Colonic mucosa (tissue), 4 donors: ENCODE measurements at regions of chr5 and their contacts with region 1.

Region 1: DNA sequence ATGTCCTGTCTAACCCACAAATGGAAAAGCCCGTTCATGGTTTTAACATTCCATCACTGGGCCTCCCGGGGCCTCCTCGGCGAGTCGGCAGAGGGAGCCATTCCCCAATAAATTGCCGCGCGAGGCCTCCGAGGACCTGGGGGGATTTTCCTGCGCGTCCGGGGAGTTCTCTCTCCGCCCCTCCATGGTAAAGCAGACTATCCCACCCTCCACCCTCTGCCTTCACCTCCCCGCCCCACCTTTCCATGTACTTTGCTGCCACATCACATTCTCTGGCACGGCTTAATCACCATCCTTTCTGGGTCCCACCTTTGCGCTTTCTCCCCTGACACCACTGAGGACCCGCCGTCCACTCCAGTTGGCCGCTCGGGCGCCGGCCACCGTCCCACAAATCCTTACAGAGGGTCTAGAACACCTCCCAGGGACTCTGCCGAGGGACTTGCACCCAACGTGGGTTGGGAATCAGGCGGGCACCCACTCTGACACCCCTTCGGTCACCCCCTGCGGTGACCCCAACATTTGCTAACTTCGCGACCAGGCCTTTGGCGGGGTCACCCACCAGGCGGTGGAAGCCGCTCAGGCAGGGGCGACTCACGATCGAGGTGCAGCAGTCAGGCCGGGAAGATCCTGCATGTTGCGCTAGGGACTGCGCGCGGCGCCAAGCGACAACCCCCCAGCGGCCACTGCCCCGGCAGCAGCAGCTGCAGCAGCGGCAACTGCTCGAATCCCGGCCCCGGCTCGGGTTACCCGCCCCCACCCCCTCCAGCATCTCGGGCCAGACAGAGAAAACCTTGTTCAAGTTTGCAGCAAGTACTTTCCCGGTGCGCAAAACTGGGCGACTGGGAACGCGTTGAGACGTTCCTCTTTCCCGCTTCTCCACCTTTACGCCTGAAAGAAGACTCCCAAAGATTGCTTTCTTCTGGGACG is at the start of gene MEGF10:
- DNase-seq: peak; percentile 35
- H3K4me3 ChIP-seq: peak within 1 kb of the TSS; percentile 23
- H3K27ac ChIP-seq: no peak within 1 kb of the TSS
- H3K4me1 ChIP-seq: no peaks in the 10 kb centered on the region
- H3K27me3 ChIP-seq: peaks cover 16% of the 10 kb centered on the region
- CTCF ChIP-seq: peak; percentile 42
- total RNA-seq, gene MEGF10: 0.35 to 0.88 TPM

Region 2: DNA sequence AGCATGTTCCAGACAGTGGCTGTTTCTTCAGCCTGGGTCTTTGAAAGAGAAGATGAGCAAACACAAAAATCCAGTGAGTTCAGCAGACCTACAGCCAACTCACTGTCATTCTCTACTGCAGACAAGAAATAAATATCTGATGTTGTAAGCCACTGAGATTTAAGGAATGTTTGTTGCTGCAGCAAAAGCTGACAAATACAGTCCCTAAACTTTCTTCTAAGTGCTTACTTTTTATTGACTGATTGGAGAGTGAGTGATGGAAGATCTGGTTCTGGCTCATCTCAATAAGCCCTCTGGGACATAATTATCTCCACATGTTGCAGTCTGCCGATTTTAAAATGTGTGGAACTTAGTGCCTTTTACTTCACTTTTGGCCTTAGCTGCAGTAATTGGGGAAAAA is 583.2 kb before region 1 on chr5:
- intact Hi-C with region 1: no loop called
- DNase-seq: no peak
- H3K4me3 ChIP-seq: no peak overlapping the region
- H3K27ac ChIP-seq: no peak overlapping the region
- H3K4me1 ChIP-seq: no peaks in the 10 kb centered on the region
- H3K27me3 ChIP-seq: no peaks in the 10 kb centered on the region
- CTCF ChIP-seq: no peak

Region 3: DNA sequence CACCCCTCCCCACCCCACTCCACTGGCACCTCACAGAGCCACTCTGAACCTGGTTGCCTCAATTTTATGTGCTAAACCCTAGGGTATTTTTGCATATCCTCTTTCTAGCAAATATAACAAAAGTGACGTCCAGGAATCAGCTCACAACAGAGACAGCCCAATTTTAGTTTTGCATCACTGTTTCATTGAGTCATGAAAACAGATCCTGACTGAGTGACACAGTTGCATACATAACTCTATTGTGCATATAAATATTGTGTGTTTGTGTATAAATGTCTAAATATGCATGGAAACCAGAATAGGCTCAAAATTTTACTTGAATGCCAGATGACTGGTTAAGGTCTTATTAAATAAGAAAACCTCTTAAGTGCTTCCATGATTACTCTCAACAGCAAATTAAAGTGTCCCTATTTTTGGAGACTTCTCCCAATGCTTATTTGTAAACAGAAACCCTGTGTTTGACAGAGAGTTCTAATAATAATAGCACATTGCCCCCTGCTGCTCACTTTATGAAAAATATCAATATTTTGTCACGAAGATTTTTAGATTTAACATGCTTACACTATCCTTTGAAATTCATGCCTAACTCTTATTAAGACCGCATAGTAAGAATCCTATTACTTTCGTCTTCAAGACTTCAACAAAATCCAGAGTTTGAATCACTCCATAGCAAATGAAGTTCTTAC is 151.7 kb after region 1 on chr5:
- intact Hi-C with region 1: loop called (anchors 5 kb)
- DNase-seq: no peak
- H3K4me3 ChIP-seq: no peak overlapping the region
- H3K27ac ChIP-seq: no peak overlapping the region
- H3K4me1 ChIP-seq: no peaks in the 10 kb centered on the region
- H3K27me3 ChIP-seq: no peaks in the 10 kb centered on the region
- CTCF ChIP-seq: no peak

Region 4: DNA sequence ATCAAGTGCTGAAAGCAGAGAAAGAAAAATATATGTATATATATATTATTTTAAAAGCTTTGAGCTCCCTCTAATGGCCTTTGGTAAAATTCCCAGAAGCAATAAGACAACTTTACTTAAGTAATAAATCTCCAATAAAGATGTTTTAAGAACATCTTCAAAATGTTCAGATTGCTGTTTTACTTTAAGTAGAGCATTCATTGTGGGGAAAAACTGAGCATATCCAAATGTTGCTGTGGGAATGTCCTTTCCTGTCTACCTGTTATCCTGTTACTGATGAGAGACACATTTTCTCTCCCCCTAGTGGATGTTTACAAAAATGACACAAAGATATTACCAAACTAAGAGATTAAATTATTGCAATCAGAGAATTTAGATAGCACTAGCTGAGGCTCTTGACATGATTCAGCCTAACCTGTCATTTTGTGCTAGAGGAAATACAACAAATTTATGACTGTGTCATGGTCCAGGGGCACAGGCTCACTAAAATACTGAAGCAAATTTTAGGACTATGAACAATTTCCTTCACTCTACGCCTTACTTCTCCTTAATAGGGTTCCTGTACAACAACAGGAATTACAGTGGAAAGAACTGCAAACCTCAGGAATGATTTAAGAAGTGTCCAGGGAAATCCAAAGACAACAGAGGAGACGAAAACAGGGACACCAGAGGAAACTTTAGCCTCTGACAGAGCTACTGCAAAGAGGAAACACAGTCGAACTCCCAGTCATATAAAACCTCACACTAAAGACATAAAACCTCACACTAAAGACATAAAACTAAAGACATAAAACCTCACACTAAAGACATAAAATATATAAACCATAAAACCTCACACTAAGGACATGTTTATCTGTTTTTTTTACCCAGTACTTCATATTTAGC is 202.8 kb after region 1 on chr5:
- intact Hi-C with region 1: loop called (anchors 5 kb)
- DNase-seq: no peak
- H3K4me3 ChIP-seq: no peak overlapping the region
- H3K27ac ChIP-seq: peak overlapping the region; percentile 56
- H3K4me1 ChIP-seq: no peaks in the 10 kb centered on the region
- H3K27me3 ChIP-seq: no peaks in the 10 kb centered on the region
- CTCF ChIP-seq: peak; percentile 60